WTC11 (cell line): ENCODE measurements at regions of chr17 and their contacts with region 1.

Region 1: DNA sequence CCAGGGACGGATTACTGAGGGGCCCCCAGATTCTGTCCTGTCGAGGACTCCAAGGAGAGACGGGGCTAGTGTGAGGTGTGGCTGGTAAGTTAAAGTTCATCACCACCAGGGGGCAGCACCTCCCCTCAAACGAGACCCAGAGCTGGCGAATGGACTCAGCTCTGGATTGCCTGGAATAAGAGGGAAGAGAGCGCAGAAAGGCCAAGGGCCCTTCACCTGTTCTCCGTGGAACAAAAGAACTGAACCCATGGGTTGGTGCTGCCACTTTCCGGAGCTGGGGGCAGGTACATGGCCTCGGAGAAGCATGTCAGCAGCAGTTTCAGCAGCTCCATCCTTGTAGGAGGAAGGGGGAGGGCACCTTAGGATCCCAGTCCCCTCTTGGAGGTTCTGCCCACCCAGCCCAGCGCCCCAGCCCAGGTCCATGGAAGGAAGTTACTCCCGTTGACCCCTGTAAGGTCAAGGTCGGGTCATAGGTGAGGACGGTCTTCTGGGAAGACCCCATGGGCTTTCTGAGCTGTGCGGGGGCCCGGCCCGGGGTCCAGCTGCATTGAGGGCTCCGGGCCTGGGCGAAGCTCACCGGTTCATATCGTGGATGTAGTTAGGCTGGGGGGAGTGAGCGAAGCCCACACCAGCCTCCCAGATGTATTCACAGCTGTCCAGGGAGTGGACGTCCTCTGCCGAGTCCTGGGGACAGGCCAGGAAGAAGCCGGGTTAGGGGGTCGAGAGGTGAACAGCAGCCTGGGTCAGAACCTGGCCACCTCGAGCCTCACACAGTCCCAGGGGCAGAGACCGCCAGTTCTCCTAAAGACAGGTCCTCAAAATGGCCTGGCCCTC is 10.7 kb downstream of the HID1 start:
- DNase-seq: peak; percentile 94
- ATAC-seq: peak; percentile 81
- H3K4me3 Mint-ChIP-seq: no peak overlapping the region
- H3K27ac Mint-ChIP-seq: no peak overlapping the region
- H3K4me1 Mint-ChIP-seq: peaks cover 8% of the 10 kb centered on the region
- H3K27me3 Mint-ChIP-seq: peaks cover 16% of the 10 kb centered on the region
- CTCF ChIP-seq: peak; percentile 88

Region 2: GRCh38 chr17:74873038-74873873 is 88.6 kb before region 1 on chr17:
- CTCF ChIA-PET with region 1: interaction called, 49 read pairs
- POLR2A ChIA-PET with region 1: interaction called, 4 read pairs
- DNase-seq: peak; percentile 99
- ATAC-seq: peak; percentile 91
- H3K4me3 Mint-ChIP-seq: peak overlapping the region; percentile 81
- H3K27ac Mint-ChIP-seq: peak overlapping the region; percentile 98
- H3K4me1 Mint-ChIP-seq: peaks cover 22% of the 10 kb centered on the region
- H3K27me3 Mint-ChIP-seq: peaks cover 8% of the 10 kb centered on the region
- CTCF ChIP-seq: no peak

Region 3: DNA sequence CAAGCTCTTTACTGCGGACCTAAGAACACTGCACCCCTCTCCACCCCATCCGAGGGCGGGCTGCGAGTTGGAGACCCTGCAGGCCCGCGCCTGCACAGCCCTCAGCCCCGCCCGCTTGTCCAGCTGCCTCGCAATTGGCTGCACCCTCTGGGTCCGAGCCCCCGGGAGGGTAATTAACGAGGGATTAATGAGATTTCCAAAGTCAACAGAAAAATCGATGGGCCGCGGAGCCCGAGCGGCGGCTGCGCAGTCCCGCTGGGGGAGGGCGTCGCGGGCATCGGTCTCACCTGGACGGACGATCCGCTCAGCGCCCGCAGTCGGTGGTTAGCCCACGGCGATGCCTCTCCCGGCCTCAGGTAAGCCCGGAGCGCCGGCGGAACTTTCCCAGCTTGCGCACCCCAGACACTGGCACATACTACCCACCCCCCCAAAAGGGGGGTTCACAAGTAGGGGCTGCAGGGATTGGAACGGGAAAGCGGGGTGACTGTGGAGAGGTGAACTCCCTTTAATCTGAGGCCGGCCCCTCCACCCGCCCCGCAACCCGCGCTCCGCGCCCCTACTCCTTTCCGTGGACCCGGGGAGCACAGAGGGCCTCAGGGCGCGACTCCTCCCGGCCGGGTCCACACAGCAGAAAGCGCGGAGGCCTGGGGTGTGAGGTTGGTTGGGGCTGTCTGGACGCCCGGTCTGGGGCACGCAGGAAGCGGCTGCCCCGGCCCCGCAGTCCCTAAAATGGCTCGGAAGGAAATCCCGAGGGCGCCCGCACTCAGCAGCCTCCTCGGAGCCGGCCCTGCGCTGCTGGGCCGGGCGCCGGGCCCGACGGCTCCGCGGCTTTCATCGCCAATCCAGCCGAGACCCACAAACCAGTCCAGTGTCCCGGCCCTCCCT is 26.0 kb before region 1 on chr17 and contains the start of gene OTOP3:
- CTCF ChIA-PET with region 1: interaction called, 24 read pairs
- POLR2A ChIA-PET with region 1: no interaction called
- DNase-seq: peak; percentile 43
- ATAC-seq: peak; percentile 54
- H3K4me3 Mint-ChIP-seq: peak within 1 kb of the TSS; percentile 67
- H3K27ac Mint-ChIP-seq: no peak within 1 kb of the TSS
- H3K4me1 Mint-ChIP-seq: peaks cover 2% of the 10 kb centered on the region; the same call in 1 of the 2 replicates
- H3K27me3 Mint-ChIP-seq: peaks cover 85% of the 10 kb centered on the region
- CTCF ChIP-seq: no peak
- total RNA-seq, gene OTOP3: not detected in 3 replicates

Region 4: DNA sequence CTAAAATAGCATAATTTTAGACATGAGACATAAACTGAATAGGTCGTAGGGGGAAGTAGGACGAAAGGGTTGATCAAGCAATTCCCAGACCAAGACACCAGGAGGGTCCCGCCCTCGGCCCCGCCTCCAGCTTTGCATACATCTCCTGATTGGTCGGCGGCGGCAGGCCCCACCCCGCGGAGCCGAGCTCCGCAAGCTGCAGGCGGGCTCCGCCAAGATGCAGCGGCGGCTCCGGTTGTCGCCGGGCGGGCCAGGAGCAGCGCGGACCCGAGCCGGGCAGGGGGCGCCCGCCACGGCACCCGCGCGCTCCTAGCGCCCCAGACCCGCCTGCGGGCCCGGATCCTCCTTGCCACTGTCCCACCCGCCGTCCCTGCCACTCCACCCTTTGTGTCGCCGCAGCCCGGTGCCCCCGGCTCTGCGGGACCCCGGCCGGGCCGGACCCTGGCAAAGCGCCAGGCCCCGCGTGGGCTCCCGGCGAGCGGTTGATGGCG is 25.6 kb after region 1 on chr17 and contains the start of gene CDR2L:
- CTCF ChIA-PET with region 1: interaction called, 47 read pairs
- POLR2A ChIA-PET with region 1: interaction called, 3 read pairs
- DNase-seq: peak; percentile 98
- ATAC-seq: peak; percentile 90
- H3K4me3 Mint-ChIP-seq: peak within 1 kb of the TSS; percentile 97
- H3K27ac Mint-ChIP-seq: peak within 1 kb of the TSS; percentile 100
- H3K4me1 Mint-ChIP-seq: peaks cover 18% of the 10 kb centered on the region
- H3K27me3 Mint-ChIP-seq: peaks cover 2% of the 10 kb centered on the region; the same call in 1 of the 2 replicates
- CTCF ChIP-seq: no peak
- total RNA-seq, gene CDR2L: 28.6 to 31.3 TPM (median 31.0 TPM) in 3 replicates

Region 5: DNA sequence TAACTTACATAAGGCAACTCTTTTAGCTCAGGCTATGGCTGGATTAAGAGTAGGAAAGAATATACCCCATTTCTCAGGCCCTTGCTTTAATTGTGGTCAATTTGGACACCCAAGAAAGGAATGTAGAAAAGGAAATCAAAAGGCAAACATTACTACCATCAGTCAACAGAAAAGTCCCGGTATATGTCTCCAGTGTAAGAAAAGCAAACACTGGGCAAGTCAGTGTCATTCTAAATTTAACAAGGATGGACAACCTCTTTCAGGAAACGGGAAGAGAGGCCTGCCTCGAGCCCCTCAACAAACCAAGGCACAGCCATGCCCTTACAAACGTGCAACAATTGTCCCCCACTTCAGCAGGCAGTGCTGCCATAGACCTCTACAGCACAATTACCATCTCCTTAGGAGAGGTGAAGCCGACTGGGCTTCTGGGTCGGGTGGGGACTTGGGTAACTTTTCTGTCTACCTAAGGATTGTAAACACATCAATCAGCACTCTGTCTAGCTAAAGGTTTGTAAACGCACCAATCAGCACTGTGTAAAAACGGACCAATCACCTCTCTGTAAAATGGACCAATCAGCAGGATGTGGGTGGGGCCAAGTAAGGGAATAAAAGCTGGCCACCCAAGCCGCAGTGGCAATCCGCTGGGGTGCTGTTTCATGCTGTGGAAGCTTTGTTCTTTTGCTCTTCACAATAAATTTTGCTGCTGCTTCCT is 63.0 kb after region 1 on chr17:
- CTCF ChIA-PET with region 1: interaction called, 48 read pairs
- POLR2A ChIA-PET with region 1: no interaction called
- DNase-seq: no peak
- ATAC-seq: no peak
- H3K4me3 Mint-ChIP-seq: no peak overlapping the region
- H3K27ac Mint-ChIP-seq: no peak overlapping the region
- H3K4me1 Mint-ChIP-seq: no peaks in the 10 kb centered on the region
- H3K27me3 Mint-ChIP-seq: peaks cover 9% of the 10 kb centered on the region
- CTCF ChIP-seq: no peak

Region 6: GRCh38 chr17:75087558-75088453 is 125.9 kb after region 1 on chr17 and contains the start of gene SLC16A5:
- CTCF ChIA-PET with region 1: interaction called, 13 read pairs
- POLR2A ChIA-PET with region 1: no interaction called
- DNase-seq: peak; percentile 95
- ATAC-seq: peak; percentile 85
- H3K4me3 Mint-ChIP-seq: peak within 1 kb of the TSS; percentile 86
- H3K27ac Mint-ChIP-seq: peak within 1 kb of the TSS; percentile 97
- H3K4me1 Mint-ChIP-seq: peaks cover 68% of the 10 kb centered on the region
- H3K27me3 Mint-ChIP-seq: no peaks in the 10 kb centered on the region; the same call in 1 of the 2 replicates
- CTCF ChIP-seq: no peak
- total RNA-seq, gene SLC16A5: 32.4 to 33.5 TPM (median 33.1 TPM) in 3 replicates

Region 7: DNA sequence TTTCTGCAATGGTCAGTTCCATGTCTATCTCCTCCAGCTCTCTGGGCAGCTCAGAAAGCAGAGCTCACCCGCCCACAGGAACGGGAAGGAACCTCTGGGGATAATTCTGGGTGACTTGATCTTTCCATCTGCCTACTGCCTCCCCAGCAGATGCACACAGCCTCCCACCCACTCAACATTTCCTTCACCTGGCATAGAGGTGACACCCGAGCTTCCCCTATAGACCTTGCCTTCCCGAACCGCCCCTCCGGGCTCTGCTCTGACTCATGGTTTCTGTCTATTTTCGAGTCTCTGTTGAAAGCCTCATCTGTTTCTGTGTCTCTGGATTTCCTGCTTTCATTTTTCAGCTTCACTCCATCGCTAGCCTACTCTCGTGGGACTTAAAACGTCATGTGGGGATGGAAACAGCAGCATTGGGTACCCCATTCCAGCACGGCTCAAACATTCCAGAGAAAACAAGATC is 288.2 kb after region 1 on chr17:
- CTCF ChIA-PET with region 1: no interaction called
- POLR2A ChIA-PET with region 1: no interaction called
- DNase-seq: no peak
- ATAC-seq: no peak
- H3K4me3 Mint-ChIP-seq: no peak overlapping the region
- H3K27ac Mint-ChIP-seq: peak overlapping the region; percentile 78
- H3K4me1 Mint-ChIP-seq: peaks cover 48% of the 10 kb centered on the region
- H3K27me3 Mint-ChIP-seq: no peaks in the 10 kb centered on the region
- CTCF ChIP-seq: no peak